Transverse colon (tissue), 4 donors: ENCODE measurements at regions of chr7 and their contacts with region 1.

Region 1: GRCh38 chr7:23273141-23273599 is 26.0 kb upstream of the MALSU1 start:
- DNase-seq: peak; percentile 94
- H3K4me3 ChIP-seq: peak overlapping the region in 1 of 4 donors; percentile 13
- H3K27ac ChIP-seq: no peak overlapping the region
- H3K4me1 ChIP-seq: peaks cover 0 to 8% (median 3%) of the 10 kb centered on the region in 4 donors
- H3K27me3 ChIP-seq: peaks cover 8% of the 10 kb centered on the region
- CTCF ChIP-seq: peak; percentile 63 to 80 (median 73)
- EP300 ChIP-seq: no peak
- POLR2A ChIP-seq: no peak

Region 2: DNA sequence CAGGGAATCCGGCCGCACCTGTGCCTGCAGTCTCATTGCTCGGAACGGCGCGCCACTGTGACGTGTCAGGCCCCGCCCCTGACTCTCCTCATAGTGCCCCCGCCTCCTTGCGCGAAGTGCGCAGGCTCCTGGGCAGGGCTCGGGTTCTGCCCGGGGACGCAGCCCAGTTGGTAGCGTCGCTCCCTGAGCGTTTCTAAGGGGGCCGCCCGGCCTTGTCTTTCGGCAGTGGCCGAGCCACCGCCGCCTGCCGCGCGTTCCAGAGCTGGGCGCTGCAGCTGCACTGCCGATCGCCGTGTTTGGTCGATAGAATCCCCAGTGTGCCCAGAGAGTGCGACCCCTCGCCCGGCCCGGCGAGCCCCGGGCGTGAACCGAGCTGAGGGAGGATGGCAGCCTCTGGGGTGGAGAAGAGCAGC is 167.5 kb before region 1 on chr7 and contains the start of gene KLHL7:
- in situ Hi-C with region 1: loop called in 1 of 4 experiments (anchors 10 kb)
- intact Hi-C with region 1: no loop called
- DNase-seq: peak; percentile 98
- H3K4me3 ChIP-seq: peak within 1 kb of the TSS; percentile 67 to 94 (median 88)
- H3K27ac ChIP-seq: peak within 1 kb of the TSS; percentile 90 to 99 (median 94)
- H3K4me1 ChIP-seq: peaks cover 5 to 33% (median 17%) of the 10 kb centered on the region in 4 donors
- H3K27me3 ChIP-seq: no peaks in the 10 kb centered on the region
- CTCF ChIP-seq: peak in 1 of 5 experiments; percentile 4
- EP300 ChIP-seq: no peak
- POLR2A ChIP-seq: peak; percentile 94
- total RNA-seq, gene KLHL7: 9.2 to 27.4 (median 25.3) TPM

Region 3: GRCh38 chr7:23234569-23235296 is 38.4 kb before region 1 on chr7:
- in situ Hi-C with region 1: no loop called
- intact Hi-C with region 1: loop called (anchors 1 kb)
- DNase-seq: peak; percentile 18
- H3K4me3 ChIP-seq: no peak overlapping the region
- H3K27ac ChIP-seq: peak overlapping the region in 1 of 4 donors; percentile 31
- H3K4me1 ChIP-seq: no peaks in the 10 kb centered on the region
- H3K27me3 ChIP-seq: no peaks in the 10 kb centered on the region
- CTCF ChIP-seq: no peak
- EP300 ChIP-seq: no peak
- POLR2A ChIP-seq: no peak

Region 4: DNA sequence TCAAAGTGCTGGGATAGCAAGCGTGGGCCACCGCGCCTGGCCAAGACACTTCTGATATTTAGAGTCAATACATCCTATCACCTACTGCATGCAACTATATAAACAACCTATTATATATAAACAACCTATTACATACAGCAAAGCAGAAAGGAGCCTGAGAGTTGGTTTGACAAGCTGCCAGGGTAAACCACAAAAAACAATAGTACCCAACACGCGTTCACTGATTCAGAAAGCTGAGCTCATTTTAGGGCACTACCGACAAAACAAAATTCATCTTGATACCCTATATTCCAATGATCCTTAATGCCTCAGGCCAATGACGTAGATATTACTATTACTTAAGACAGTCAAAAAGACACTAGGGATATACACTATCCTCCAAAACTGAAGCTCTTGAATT is 42.2 kb after region 1 on chr7:
- in situ Hi-C with region 1: no loop called
- intact Hi-C with region 1: no loop called
- DNase-seq: no peak
- H3K4me3 ChIP-seq: no peak overlapping the region
- H3K27ac ChIP-seq: no peak overlapping the region
- H3K4me1 ChIP-seq: no peaks in the 10 kb centered on the region
- H3K27me3 ChIP-seq: no peaks in the 10 kb centered on the region
- CTCF ChIP-seq: no peak
- EP300 ChIP-seq: no peak
- POLR2A ChIP-seq: no peak